ENCODE measurements at regions of chr19 and their contacts with region 1.

Region 1: DNA sequence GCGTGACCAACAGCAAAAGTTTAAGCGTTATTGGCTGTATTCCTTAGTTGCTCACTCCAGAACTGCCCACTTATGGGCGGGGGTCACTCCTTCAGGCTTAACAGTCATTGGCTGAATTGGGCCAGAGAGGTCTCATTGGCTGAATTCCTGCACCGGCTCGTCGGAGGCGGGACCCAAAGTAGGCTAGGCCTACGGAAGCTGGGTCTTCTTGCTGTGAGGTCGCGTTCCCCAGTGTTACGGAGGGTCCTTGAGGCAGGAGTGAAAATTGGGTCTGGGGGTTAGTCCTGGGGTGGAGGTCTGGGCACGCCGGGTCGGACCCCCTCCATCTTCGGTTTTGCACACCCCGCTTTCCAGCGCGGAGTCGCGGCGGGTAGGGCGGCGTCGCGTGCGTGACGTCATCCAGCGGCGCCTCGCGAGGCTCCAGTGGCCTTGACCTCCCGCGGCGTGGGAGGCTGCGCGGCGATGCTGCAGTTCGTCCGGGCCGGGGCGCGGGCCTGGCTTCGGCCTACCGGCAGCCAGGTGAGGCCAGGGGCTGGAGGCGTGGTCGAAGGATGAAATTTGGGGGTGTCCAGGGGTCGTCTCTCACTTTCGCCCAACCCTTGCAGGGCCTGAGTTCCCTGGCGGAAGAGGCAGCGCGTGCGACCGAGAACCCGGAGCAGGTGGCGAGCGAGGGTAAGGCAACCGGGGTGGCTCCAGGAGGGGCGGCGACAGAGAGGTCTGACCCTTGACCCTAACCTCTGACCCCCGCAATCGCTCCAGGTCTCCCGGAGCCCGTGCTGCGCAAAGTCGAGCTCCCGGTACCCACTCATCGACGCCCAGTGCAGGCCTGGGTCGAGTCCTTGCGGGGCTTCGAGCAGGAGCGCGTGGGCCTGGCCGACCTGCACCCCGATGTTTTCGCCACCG is at the start of gene MRPL4:
- DNase-seq: peak; percentile 99
- ATAC-seq: peak; percentile 97
- H3K4me3 ChIP-seq: peak within 1 kb of the TSS; percentile 64
- H3K27ac ChIP-seq: peak within 1 kb of the TSS; percentile 72
- H3K4me1 ChIP-seq: 0 out of 2 replicates have a peak, but pooled peaks cover 2% of the 10 kb centered on the region
- H3K27me3 ChIP-seq: no peaks in the 10 kb centered on the region
- CTCF ChIP-seq: no peak
- POLR2A ChIP-seq: no peak
- RAD21 ChIP-seq: no peak
- total RNA-seq, gene MRPL4: 32.8 and 36.4 TPM in 2 replicates

Region 2: DNA sequence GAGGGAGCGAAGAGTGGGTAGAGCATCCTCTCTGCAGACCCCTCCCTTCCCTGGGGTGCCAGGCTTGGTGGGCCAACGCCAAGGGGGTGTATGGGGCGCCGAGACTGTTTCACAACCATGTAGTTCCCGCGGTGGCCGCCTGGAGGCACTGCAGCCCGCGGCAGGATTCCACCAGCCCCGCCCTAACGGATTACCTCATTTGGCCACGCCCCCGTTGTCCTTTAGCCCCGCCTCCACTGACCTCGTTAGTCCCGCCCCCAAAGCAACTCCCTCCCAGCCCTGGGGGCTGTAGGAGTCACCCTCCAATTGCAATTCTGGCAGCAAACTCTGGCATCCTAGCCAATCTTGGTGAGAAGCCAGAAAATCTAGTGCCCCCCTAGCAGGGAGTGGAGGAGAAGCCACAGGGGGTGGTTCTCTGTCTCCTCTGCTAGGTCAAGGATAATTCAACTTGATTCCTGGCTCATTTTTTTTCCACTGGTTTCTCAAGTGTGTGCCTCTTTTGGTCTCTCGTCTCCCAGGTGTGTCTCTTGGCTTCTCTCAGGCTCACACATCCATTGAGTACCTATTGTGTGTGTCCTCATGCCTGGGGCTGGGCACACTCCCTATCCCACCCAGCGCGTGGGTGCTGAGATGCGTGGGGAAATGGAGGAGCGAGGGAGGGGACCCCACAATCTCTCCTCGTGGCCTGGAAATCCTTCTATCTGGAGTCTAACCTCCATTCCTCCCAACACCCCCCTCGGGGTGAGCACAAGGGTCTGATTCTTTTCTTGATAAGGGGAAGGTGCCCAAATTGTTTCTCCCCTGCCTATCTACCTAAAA is 317.7 kb before region 1 on chr19:
- CTCF ChIA-PET with region 1: no interaction called
- POLR2A ChIA-PET with region 1: no interaction called
- dilution Hi-C with region 1: no loop called
- in situ Hi-C with region 1: no loop called
- intact Hi-C with region 1: loop called (anchors 1 kb)
- DNase-seq: peak; percentile 69
- ATAC-seq: peak; percentile 86
- H3K4me3 ChIP-seq: no peak overlapping the region
- H3K27ac ChIP-seq: no peak overlapping the region
- H3K4me1 ChIP-seq: peaks cover 6% of the 10 kb centered on the region; the same call in 1 of the 2 replicates
- H3K27me3 ChIP-seq: peaks cover 22% of the 10 kb centered on the region
- CTCF ChIP-seq: peak; percentile 94
- POLR2A ChIP-seq: 0 out of 2 replicates have a peak, but pooled peaks have one; percentile 34
- RAD21 ChIP-seq: peak; percentile 97

Region 3: DNA sequence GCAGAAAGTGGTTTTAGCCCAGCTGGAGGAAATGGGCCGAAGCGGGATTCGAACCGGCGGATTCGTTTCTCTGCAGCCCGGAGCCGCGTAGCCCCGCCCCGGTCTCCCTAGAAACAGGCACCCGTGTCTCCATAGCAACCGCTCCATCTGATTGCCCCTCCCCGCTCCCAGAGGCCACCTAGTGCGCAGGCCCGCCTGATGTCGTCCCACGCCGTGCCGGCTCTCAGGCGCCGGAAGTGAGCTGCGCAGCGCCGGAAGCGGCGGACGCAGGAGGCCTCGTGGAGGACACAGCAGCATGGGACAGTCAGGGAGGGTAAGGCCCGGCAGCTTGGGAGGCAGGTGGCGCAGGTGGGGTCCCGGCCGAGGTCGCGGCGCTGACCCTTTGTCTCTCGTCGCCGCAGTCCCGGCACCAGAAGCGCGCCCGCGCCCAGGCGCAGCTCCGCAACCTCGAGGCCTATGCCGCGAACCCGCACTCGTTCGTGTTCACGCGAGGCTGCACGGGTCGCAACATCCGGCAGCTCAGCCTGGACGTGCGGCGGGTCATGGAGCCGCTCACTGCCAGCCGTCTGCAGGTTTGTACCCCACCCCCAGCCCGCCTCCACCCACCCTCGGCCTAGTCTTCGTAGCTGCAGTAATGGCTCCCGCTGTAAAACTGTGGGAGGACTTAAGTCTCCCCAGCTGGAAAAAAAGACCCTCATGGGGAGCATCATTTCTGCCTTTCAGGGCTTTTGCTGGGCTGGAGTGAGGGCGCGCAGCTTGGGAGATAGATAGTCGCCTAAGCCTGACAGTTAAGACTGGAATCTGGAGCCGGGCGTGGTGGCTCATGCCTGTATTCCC is 145.7 kb before region 1 on chr19 and contains the start of gene PPAN:
- CTCF ChIA-PET with region 1: no interaction called
- POLR2A ChIA-PET with region 1: no interaction called
- dilution Hi-C with region 1: no loop called
- in situ Hi-C with region 1: no loop called
- intact Hi-C with region 1: loop called (anchors 5 kb)
- DNase-seq: peak; percentile 98
- ATAC-seq: peak; percentile 93
- H3K4me3 ChIP-seq: peak within 1 kb of the TSS; percentile 76
- H3K27ac ChIP-seq: peak within 1 kb of the TSS; percentile 82
- H3K4me1 ChIP-seq: peaks cover 4% of the 10 kb centered on the region
- H3K27me3 ChIP-seq: no peaks in the 10 kb centered on the region
- CTCF ChIP-seq: no peak
- POLR2A ChIP-seq: peak; percentile 86
- RAD21 ChIP-seq: no peak
- total RNA-seq, gene PPAN: 24.0 and 30.3 TPM in 2 replicates

Region 4: DNA sequence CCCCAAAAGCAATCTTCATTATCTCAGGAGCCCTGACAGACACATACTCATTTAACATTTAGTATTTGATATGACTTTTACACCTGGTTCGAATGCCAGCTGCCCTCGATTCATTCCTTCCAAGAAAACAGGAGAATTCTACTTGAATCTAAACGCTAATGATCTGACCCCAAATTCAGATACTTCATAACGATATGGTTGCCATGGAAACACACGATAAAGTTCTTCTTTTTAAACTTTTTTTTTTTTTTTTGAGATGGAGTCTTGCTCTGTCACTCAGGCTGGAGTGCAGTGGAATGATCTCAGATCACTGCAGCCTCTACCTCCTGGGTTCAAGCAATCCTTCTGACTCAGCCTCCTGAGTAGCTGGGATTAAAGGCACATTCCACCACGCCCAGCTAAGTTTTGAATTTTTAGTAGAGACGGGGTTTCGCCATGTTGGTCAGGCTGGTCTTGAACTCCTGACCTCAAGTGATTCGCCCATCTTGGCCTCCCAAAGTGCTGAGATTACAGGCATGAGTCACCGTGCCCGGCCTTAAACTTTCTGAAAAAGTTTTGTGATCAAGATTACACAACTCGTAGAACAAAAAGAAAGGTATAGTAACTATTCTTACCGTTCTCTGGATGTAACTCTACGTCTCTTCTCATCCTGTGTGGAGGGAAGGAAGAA is 78.7 kb before region 1 on chr19:
- CTCF ChIA-PET with region 1: interaction called, 6 read pairs
- POLR2A ChIA-PET with region 1: no interaction called
- dilution Hi-C with region 1: no loop called
- in situ Hi-C with region 1: no loop called
- intact Hi-C with region 1: loop called (anchors 5 kb)
- DNase-seq: peak; percentile 50
- ATAC-seq: peak; percentile 61
- H3K4me3 ChIP-seq: no peak overlapping the region
- H3K27ac ChIP-seq: 0 out of 2 replicates have a peak overlapping the region, but pooled peaks have one; percentile 37
- H3K4me1 ChIP-seq: no peaks in the 10 kb centered on the region
- H3K27me3 ChIP-seq: no peaks in the 10 kb centered on the region
- CTCF ChIP-seq: no peak
- POLR2A ChIP-seq: no peak
- RAD21 ChIP-seq: no peak

Region 5: DNA sequence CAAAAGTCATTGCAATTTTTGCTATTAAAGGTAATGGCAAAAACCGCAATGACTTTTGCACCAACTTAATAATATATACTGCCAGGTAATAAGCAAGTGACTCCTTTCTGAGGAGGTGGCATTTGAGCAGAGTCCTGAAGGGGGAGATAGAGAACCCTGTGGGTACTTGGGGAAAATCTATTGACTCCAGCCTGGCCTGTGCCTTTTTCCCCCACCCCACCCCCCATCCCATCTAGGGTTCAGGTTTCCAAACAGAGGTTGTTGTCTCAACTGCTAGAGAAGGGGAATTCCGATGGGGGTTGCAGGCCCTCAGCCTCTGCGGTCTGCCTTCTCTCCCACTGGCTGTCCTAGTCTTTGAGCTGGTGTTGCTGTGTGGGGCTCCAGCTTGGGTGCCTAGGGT is 32.4 kb before region 1 on chr19:
- CTCF ChIA-PET with region 1: no interaction called
- POLR2A ChIA-PET with region 1: no interaction called
- dilution Hi-C with region 1: no loop called
- in situ Hi-C with region 1: no loop called
- intact Hi-C with region 1: loop called (anchors 1 kb)
- DNase-seq: peak; percentile 89
- ATAC-seq: peak; percentile 91
- H3K4me3 ChIP-seq: no peak overlapping the region
- H3K27ac ChIP-seq: peak overlapping the region; percentile 7; the same call in 1 of the 2 replicates
- H3K4me1 ChIP-seq: peaks cover 5% of the 10 kb centered on the region
- H3K27me3 ChIP-seq: no peaks in the 10 kb centered on the region
- CTCF ChIP-seq: peak; percentile 61
- POLR2A ChIP-seq: no peak
- RAD21 ChIP-seq: peak; percentile 57

Region 6: GRCh38 chr19:10238172-10238783 is 13.8 kb before region 1 on chr19:
- CTCF ChIA-PET with region 1: interaction called, 4 read pairs
- POLR2A ChIA-PET with region 1: no interaction called
- dilution Hi-C with region 1: no loop called
- in situ Hi-C with region 1: no loop called
- intact Hi-C with region 1: loop called (anchors 1 kb)
- DNase-seq: peak; percentile 91
- ATAC-seq: peak; percentile 89
- H3K4me3 ChIP-seq: no peak overlapping the region
- H3K27ac ChIP-seq: peak overlapping the region; percentile 66
- H3K4me1 ChIP-seq: peaks cover 12% of the 10 kb centered on the region
- H3K27me3 ChIP-seq: no peaks in the 10 kb centered on the region
- CTCF ChIP-seq: no peak
- POLR2A ChIP-seq: no peak
- RAD21 ChIP-seq: 0 out of 2 replicates have a peak, but pooled peaks have one; percentile 9